K562 (cell line): ENCODE measurements at regions of chr2 and their contacts with region 1.

Region 1: DNA sequence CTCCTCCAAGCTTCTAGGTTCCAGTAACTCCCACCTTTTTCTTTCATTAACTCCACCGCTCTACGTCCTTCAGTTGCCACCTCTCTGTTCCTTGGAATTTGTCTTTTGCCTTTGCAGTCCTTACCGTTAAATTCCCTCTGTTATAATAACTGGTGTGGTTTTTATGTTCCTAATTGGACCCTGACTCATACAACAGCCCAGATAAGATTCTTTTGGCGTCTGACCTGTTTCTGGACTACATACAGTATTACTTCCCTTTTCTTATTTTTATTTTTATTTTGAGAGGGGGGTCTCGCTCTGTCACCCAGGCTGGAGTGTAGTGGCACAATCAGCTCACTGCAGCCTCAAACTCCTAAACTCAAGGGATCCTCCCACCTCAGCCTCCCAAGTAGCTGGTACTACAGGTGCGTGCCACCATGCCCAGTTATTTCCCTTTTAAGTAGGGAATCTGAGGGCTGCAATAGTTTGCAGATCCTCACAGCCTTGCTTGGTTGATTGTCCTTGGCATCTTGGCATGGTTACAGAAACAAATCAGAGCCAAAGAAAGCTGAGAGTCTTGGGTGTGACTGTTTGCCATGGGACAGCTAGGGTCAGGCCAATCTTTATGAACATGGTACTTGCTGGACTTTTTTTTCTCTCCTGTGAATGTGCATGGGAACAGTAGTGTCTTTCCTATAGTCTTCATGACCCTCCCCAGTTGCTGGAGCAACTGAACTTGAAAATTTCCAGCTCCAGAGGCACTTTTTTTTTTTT is 22.0 kb downstream of the TCF23 start:
- DNase-seq: no peak
- ATAC-seq: no peak; the same call in 2 of the 3 replicates
- H3K4me3 ChIP-seq: no peak overlapping the region
- H3K27ac ChIP-seq: no peak overlapping the region
- H3K4me1 ChIP-seq: peaks cover 8 to 9% of the 10 kb centered on the region in 2 experiments; a peak in 3 of 5 replicates
- H3K27me3 ChIP-seq: peaks cover 11 to 35% of the 10 kb centered on the region in 2 experiments; a peak in 4 of 5 replicates
- CTCF ChIP-seq: no peak
- EP300 ChIP-seq: no peak
- POLR2A ChIP-seq: no peak
- RAD21 ChIP-seq: no peak

Region 2: GRCh38 chr2:27191053-27191829 is 20.5 kb after region 1 on chr2:
- CTCF ChIA-PET with region 1: no interaction called
- POLR2A ChIA-PET with region 1: interaction called, 8 read pairs
- in situ Hi-C with region 1: no loop called
- intact Hi-C with region 1: loop called (anchors 2 kb)
- DNase-seq: peak; percentile 54 to 79 (median 62)
- ATAC-seq: peak; percentile 98
- H3K4me3 ChIP-seq: no peak overlapping the region
- H3K27ac ChIP-seq: no peak overlapping the region
- H3K4me1 ChIP-seq: no peaks in the 10 kb centered on the region; a peak in 2 of 5 replicates
- H3K27me3 ChIP-seq: no peaks in the 10 kb centered on the region
- CTCF ChIP-seq: peak; percentile 79 to 93 (median 82)
- EP300 ChIP-seq: no peak
- POLR2A ChIP-seq: no peak
- RAD21 ChIP-seq: peak; percentile 91